Right ventricle myocardium superior (tissue), 1 donor: ENCODE measurements at regions of chr11 and their contacts with region 1.

Region 1: DNA sequence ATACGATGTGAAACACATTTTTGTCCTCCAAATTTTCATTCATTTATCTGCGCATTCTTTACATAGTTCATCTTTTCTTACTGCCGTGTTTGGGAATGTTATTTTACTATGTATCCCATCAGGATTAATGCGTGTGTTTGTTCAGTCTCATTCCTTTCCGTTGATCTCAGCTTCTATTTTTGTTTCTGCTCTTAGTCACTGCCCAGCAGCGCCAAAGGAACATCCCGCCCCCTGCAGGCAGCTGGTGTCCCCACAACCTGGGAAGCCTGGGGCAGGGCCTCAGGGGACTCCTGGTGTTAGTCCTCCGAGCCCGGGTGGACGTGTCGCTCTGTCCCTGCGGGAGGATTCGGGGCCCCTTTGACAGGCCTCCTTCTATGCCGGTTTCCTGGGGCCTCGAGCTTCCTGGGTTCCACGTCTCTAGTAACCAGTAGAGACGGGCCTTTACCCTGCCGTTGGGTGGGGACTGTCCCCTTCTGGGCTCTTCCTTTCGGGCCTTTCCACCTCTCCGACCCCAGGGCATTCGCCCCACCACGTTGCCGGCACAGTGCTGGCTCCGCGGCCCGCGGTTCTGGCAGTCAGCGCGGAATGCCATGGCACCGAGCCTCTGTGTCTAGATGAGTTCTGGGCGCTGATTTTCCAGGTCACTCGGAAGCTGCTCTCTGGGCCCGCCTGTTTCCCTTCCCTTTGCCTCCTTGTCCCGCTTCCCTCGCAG is 39.8 kb downstream of the WEE1 start:
- DNase-seq: peak; percentile 95
- ATAC-seq: peak; percentile 92

Region 2: GRCh38 chr11:9534791-9535781 is 78.2 kb before region 1 on chr11:
- intact Hi-C with region 1: loop called (anchors 10 kb)
- DNase-seq: peak; percentile 90
- ATAC-seq: peak; percentile 67

Region 3: GRCh38 chr11:9573052-9573774 is 40.1 kb before region 1 on chr11 and contains the start of gene WEE1:
- intact Hi-C with region 1: loop called (anchors 5 kb)
- DNase-seq: peak; percentile 99
- ATAC-seq: peak; percentile 94
- total RNA-seq, gene WEE1: 32.7 TPM

Region 4: GRCh38 chr11:9663699-9664275 is 50.5 kb after region 1 on chr11 and contains the start of gene SWAP70:
- intact Hi-C with region 1: loop called (anchors 5 kb)
- DNase-seq: peak; percentile 94
- ATAC-seq: peak; percentile 99
- total RNA-seq, gene SWAP70: 19.0 TPM

Region 5: GRCh38 chr11:9748361-9748970 is 135.2 kb after region 1 on chr11:
- intact Hi-C with region 1: loop called (anchors 5 kb)
- DNase-seq: no peak
- ATAC-seq: peak; percentile 85